Activated CD4-positive, alpha-beta T cell treated with anti-CD3 and anti-CD28 coated beads for 36 hours (primary cell): ENCODE measurements at regions of chr12 and their contacts with region 1.

Region 1: DNA sequence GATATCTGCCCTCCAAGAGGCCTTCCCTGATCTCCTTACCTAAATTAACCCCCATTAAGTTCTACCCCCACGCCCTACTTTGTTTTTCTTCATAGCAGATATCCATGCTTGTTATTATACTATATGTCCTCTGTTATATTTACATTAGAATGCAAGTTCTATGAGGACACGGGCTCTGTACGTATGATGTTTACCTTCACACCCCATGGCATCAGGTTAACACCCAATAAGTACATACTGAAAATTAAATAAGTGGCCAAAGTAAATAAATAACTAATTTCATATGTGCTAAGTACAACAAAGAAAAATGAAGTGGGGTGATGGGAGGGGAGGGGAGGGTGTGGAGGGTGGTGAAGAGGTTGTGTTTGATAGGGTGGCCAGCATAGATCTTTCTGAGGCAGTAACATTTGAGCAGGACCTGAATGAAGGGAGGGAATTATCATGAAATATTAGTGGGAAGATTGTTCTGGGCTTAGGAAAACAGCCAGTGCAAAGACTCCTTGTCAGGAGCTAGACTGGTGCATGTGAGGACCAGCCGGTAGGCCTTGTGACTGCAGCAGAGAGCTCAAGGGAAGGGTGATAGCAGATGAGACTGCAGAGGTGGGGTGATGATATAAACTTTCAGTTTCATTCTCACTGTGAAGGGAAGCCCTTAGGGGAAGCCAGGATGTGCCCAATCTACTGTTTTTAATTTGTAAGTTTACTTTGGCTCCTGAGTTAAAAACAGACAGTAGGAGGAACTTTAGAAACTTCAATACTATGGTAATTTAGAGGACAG is 12.6 kb downstream of the IL22 start:
- DNase-seq: peak; percentile 73
- ATAC-seq: peak; percentile 97
- H3K4me3 Mint-ChIP-seq: peak overlapping the region; percentile 4
- H3K27ac Mint-ChIP-seq: peak overlapping the region; percentile 27
- H3K4me1 Mint-ChIP-seq: peaks cover 48% of the 10 kb centered on the region
- H3K27me3 Mint-ChIP-seq: peaks cover 2% of the 10 kb centered on the region

Region 2: GRCh38 chr12:68180792-68181744 is 59.7 kb before region 1 on chr12:
- CTCF ChIA-PET with region 1: no interaction called
- POLR2A ChIA-PET with region 1: no interaction called
- intact Hi-C with region 1: loop called in 1 of 2 experiments (anchors 5 kb)
- DNase-seq: peak; percentile 69
- ATAC-seq: peak; percentile 91
- H3K4me3 Mint-ChIP-seq: peak overlapping the region; percentile 7
- H3K27ac Mint-ChIP-seq: peak overlapping the region; percentile 89
- H3K4me1 Mint-ChIP-seq: peaks cover 54% of the 10 kb centered on the region
- H3K27me3 Mint-ChIP-seq: peaks cover 2% of the 10 kb centered on the region

Region 3: DNA sequence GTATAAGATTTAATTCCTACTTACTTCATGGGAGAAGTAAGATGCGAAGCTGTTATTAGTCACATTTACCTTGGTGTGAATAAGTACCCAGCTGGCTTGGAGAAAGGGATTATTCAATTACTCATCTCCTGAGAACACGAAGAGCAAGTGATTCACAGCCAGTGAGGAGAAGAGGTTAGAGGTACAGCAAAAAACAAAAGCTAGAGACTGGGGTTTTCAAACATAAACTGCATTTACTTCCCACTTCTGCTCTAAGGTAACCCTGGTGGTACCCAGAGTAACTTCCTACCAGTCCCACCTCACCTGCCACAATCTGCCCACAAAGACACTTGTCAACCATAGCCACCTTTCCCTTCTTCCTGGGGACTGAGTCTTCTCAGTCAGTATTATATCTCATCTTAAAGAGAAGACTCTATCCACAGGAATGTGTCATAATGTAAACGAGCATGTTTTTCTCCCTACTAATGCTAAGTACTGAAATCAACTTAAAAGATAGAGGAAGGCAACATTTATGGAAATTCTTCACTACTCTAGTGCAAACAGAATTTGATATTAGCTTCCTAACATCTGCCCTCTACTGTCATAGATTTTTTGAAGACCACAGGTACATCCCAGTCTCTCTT is 18.6 kb after region 1 on chr12:
- CTCF ChIA-PET with region 1: interaction called, 6 read pairs
- POLR2A ChIA-PET with region 1: no interaction called
- intact Hi-C with region 1: loop called (anchors 1 kb)
- DNase-seq: peak; percentile 62
- ATAC-seq: peak; percentile 95
- H3K4me3 Mint-ChIP-seq: no peak overlapping the region
- H3K27ac Mint-ChIP-seq: peak overlapping the region; percentile 30
- H3K4me1 Mint-ChIP-seq: peaks cover 31% of the 10 kb centered on the region
- H3K27me3 Mint-ChIP-seq: peaks cover 35% of the 10 kb centered on the region